Transverse colon (tissue), 4 donors: ENCODE measurements at regions of chr7 and their contacts with region 1.

Region 1: GRCh38 chr7:112206238-112207044 is at the starts of genes DOCK4 and ZNF277:
- DNase-seq: peak; percentile 99
- H3K4me3 ChIP-seq: peak within 1 kb of the TSS; percentile 64 to 94 (median 86)
- H3K27ac ChIP-seq: peak within 1 kb of the TSS; percentile 86 to 91 (median 88)
- H3K4me1 ChIP-seq: peaks cover 0 to 39% (median 18%) of the 10 kb centered on the region in 4 donors
- H3K27me3 ChIP-seq: peaks cover 2% of the 10 kb centered on the region
- CTCF ChIP-seq: no peak
- EP300 ChIP-seq: no peak
- POLR2A ChIP-seq: peak; percentile 66
- total RNA-seq, gene DOCK4: 12.7 to 28.4 (median 19.5) TPM
- total RNA-seq, gene ZNF277: 2.2 to 27.6 (median 24.1) TPM

Region 2: GRCh38 chr7:112067632-112068540 is 138.6 kb before region 1 on chr7:
- in situ Hi-C with region 1: no loop called
- intact Hi-C with region 1: no loop called
- DNase-seq: no peak
- H3K4me3 ChIP-seq: no peak overlapping the region
- H3K27ac ChIP-seq: no peak overlapping the region
- H3K4me1 ChIP-seq: no peaks in the 10 kb centered on the region
- H3K27me3 ChIP-seq: no peaks in the 10 kb centered on the region
- CTCF ChIP-seq: no peak
- EP300 ChIP-seq: no peak
- POLR2A ChIP-seq: no peak

Region 3: GRCh38 chr7:112129655-112130323 is 76.7 kb before region 1 on chr7:
- in situ Hi-C with region 1: no loop called
- intact Hi-C with region 1: no loop called
- DNase-seq: no peak
- H3K4me3 ChIP-seq: no peak overlapping the region
- H3K27ac ChIP-seq: no peak overlapping the region
- H3K4me1 ChIP-seq: peaks cover 0 to 5% (median 2%) of the 10 kb centered on the region in 4 donors
- H3K27me3 ChIP-seq: no peaks in the 10 kb centered on the region
- CTCF ChIP-seq: no peak
- EP300 ChIP-seq: no peak
- POLR2A ChIP-seq: no peak

Region 4: GRCh38 chr7:112383671-112384417 is 177.4 kb after region 1 on chr7:
- in situ Hi-C with region 1: loop called in 1 of 4 experiments (anchors 25 kb)
- intact Hi-C with region 1: no loop called
- DNase-seq: no peak
- H3K4me3 ChIP-seq: no peak overlapping the region
- H3K27ac ChIP-seq: no peak overlapping the region
- H3K4me1 ChIP-seq: no peaks in the 10 kb centered on the region
- H3K27me3 ChIP-seq: no peaks in the 10 kb centered on the region
- CTCF ChIP-seq: no peak
- EP300 ChIP-seq: no peak
- POLR2A ChIP-seq: no peak

Region 5: GRCh38 chr7:112449902-112450806 is 243.7 kb after region 1 on chr7 and contains the start of gene IFRD1:
- in situ Hi-C with region 1: loop called in 1 of 4 experiments (anchors 25 kb)
- intact Hi-C with region 1: no loop called
- DNase-seq: peak; percentile 99
- H3K4me3 ChIP-seq: peak within 1 kb of the TSS; percentile 64 to 95 (median 82)
- H3K27ac ChIP-seq: peak within 1 kb of the TSS; percentile 95 to 100 (median 98)
- H3K4me1 ChIP-seq: peaks cover 15 to 48% (median 38%) of the 10 kb centered on the region in 4 donors
- H3K27me3 ChIP-seq: no peaks in the 10 kb centered on the region
- CTCF ChIP-seq: no peak
- EP300 ChIP-seq: no peak
- POLR2A ChIP-seq: peak; percentile 100
- total RNA-seq, gene IFRD1: 23.3 to 92.7 (median 52.0) TPM

Region 6: DNA sequence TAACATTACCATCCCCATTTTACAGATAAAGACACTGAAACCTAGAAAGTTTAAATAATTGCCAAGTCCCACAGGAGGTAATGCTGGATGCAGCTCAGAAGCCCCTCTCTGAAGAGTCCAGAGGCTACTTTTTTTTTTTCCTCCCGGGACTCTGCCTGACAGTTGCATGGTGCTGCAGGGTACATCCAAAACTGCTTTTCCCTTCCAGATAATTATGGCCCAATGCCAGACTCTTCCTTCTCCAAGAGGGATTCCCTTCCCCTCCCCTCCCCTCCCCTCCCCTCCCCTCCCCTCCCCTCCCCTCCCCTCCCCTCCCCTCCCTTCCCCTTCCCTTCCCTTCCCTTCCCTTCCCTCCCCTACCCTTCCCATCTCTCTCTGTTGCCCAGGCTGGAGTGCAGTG is 397.2 kb after region 1 on chr7:
- in situ Hi-C with region 1: no loop called
- intact Hi-C with region 1: no loop called
- DNase-seq: no peak
- H3K4me3 ChIP-seq: no peak overlapping the region
- H3K27ac ChIP-seq: no peak overlapping the region
- H3K4me1 ChIP-seq: no peaks in the 10 kb centered on the region
- H3K27me3 ChIP-seq: no peaks in the 10 kb centered on the region
- CTCF ChIP-seq: no peak
- EP300 ChIP-seq: no peak
- POLR2A ChIP-seq: no peak